Pancreas (tissue), 10 donors: ENCODE measurements at regions of chr12 and their contacts with region 1.

Region 1: DNA sequence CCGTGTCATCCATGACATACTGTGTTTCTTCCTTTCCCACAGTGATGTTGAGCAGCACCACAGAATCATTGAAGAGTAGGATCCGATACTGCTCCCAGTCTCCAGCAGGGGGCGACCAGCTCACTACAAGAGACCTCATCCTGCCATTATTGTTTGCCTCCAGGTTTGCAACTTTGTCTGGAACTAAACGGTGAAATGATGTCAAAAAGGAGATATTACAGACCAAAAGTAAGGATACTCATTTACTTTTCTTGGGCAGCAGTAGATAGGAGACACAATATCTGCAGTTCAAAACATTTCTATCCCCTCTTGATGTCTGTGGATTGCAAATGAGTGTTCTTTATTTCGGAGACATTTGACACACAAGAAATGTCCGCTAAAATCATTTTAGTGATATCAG is 47.2 kb downstream of the PTPRB start:
- DNase-seq: peak; percentile 21 to 80 (median 64)
- ATAC-seq: peak; percentile 70 to 91 (median 88)
- H3K4me3 ChIP-seq: no peak overlapping the region
- H3K27ac ChIP-seq: no peak overlapping the region
- H3K4me1 ChIP-seq: no peaks in the 10 kb centered on the region
- H3K27me3 ChIP-seq: no peaks in the 10 kb centered on the region
- CTCF ChIP-seq: peak; percentile 76 to 87 (median 80)

Region 2: GRCh38 chr12:70719672-70720420 is 129.8 kb after region 1 on chr12:
- intact Hi-C with region 1: loop called in 2 of 3 experiments (anchors 5 kb)
- DNase-seq: peak in 2 of 6 donors; percentile 20 to 61
- ATAC-seq: peak in 3 of 4 donors; percentile 67 to 80 (median 78)
- H3K4me3 ChIP-seq: no peak overlapping the region
- H3K27ac ChIP-seq: no peak overlapping the region
- H3K4me1 ChIP-seq: no peaks in the 10 kb centered on the region
- H3K27me3 ChIP-seq: no peaks in the 10 kb centered on the region
- CTCF ChIP-seq: peak; percentile 44 to 77 (median 66)